ENCODE measurements at regions of chr7 and their contacts with region 1.

Region 1: GRCh38 chr7:151368136-151368571 is 26.5 kb downstream of the NUB1 start:
- DNase-seq: peak; percentile 55 to 80 (median 69)
- ATAC-seq: peak; percentile 99
- H3K4me3 ChIP-seq: no peak overlapping the region
- H3K4me3 Mint-ChIP-seq: no peak overlapping the region
- H3K27ac ChIP-seq: no peak overlapping the region
- H3K27ac Mint-ChIP-seq: peak overlapping the region in 2 of 9 donors; percentile 46 to 56
- H3K4me1 ChIP-seq: peaks cover 0 to 4% of the 10 kb centered on the region in 2 donors
- H3K4me1 Mint-ChIP-seq: peaks cover 3 to 29% (median 12%) of the 10 kb centered on the region in 7 donors
- H3K27me3 ChIP-seq: no peaks in the 10 kb centered on the region
- H3K27me3 Mint-ChIP-seq: no peaks in the 10 kb centered on the region

Region 2: GRCh38 chr7:150898475-150899011 is 469.6 kb before region 1 on chr7:
- CTCF ChIA-PET with region 1: no interaction called
- POLR2A ChIA-PET with region 1: no interaction called
- intact Hi-C with region 1: no loop called
- DNase-seq: peak; percentile 44 to 81 (median 70)
- ATAC-seq: peak; percentile 84
- H3K4me3 ChIP-seq: no peak overlapping the region
- H3K4me3 Mint-ChIP-seq: peak overlapping the region in 1 of 10 donors; percentile 19
- H3K27ac ChIP-seq: no peak overlapping the region
- H3K27ac Mint-ChIP-seq: peak overlapping the region in 1 of 9 donors; percentile 34
- H3K4me1 ChIP-seq: no peaks in the 10 kb centered on the region
- H3K4me1 Mint-ChIP-seq: peaks cover 0 to 11% (median 5%) of the 10 kb centered on the region in 7 donors
- H3K27me3 ChIP-seq: no peaks in the 10 kb centered on the region
- H3K27me3 Mint-ChIP-seq: peaks cover 32 to 66% (median 60%) of the 10 kb centered on the region in 5 donors

Region 3: GRCh38 chr7:151315038-151315655 is 53.0 kb before region 1 on chr7:
- CTCF ChIA-PET with region 1: interaction called, 10 read pairs
- POLR2A ChIA-PET with region 1: no interaction called
- intact Hi-C with region 1: loop called in 1 of 2 experiments (anchors 1 kb)
- DNase-seq: peak; percentile 48 to 87 (median 82)
- ATAC-seq: peak; percentile 96
- H3K4me3 ChIP-seq: no peak overlapping the region
- H3K4me3 Mint-ChIP-seq: peak overlapping the region in 8 of 10 donors; percentile 1 to 80 (median 56)
- H3K27ac ChIP-seq: no peak overlapping the region
- H3K27ac Mint-ChIP-seq: peak overlapping the region in 6 of 9 donors; percentile 33 to 81 (median 58)
- H3K4me1 ChIP-seq: no peaks in the 10 kb centered on the region
- H3K4me1 Mint-ChIP-seq: peaks cover 0 to 11% (median 5%) of the 10 kb centered on the region in 7 donors
- H3K27me3 ChIP-seq: no peaks in the 10 kb centered on the region
- H3K27me3 Mint-ChIP-seq: no peaks in the 10 kb centered on the region

Region 4: GRCh38 chr7:151408839-151409666 is 40.9 kb after region 1 on chr7:
- CTCF ChIA-PET with region 1: interaction called, 3 read pairs
- POLR2A ChIA-PET with region 1: interaction called, 5 read pairs
- intact Hi-C with region 1: loop called in 1 of 2 experiments (anchors 5 kb)
- DNase-seq: peak in 8 of 9 donors; percentile 23 to 71 (median 64)
- ATAC-seq: peak; percentile 88
- H3K4me3 ChIP-seq: peak overlapping the region; percentile 51
- H3K4me3 Mint-ChIP-seq: peak overlapping the region; percentile 67 to 88 (median 78)
- H3K27ac ChIP-seq: no peak overlapping the region
- H3K27ac Mint-ChIP-seq: peak overlapping the region in 6 of 9 donors; percentile 8 to 81 (median 52)
- H3K4me1 ChIP-seq: peaks cover 11 to 24% of the 10 kb centered on the region in 2 donors
- H3K4me1 Mint-ChIP-seq: peaks cover 11 to 24% (median 15%) of the 10 kb centered on the region in 7 donors
- H3K27me3 ChIP-seq: peaks cover 0 to 8% of the 10 kb centered on the region in 2 donors
- H3K27me3 Mint-ChIP-seq: peaks cover 19 to 63% (median 27%) of the 10 kb centered on the region in 5 donors

Region 5: DNA sequence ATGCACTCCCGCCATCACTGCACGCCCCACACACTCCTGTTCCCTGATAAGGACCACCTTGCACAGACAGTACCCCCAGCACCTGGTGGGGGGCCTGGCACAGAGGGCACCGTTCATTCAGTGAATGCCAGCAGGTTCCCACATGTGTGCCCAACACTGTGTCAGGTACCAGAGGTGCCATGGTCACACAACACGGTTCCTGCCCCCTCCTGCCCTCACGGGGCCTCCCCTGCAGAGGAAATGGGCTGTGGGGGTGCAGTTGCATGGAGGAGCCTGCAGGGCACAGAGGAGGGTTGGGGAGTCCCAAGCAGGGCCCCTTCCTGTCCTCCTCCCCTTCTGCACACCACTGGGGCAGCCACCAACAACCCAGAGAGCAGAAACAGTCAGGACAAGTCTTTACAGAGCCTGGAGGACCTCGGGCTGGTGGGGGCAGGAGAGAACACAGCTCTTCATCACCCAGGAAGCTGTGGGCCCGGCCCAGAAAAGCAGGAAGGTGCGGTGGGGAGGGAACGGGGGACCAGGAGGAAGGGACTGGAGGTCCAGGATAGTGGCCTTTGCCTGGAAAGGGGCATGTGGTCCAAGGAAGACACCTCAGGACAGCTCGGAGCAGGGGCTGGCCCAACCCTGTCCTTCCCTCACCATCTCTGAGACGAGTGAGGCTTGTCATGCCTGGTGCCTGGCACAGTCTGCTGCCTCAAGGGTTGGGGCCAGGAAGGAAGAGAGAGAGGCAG is 64.8 kb after region 1 on chr7:
- CTCF ChIA-PET with region 1: interaction called, 5 read pairs
- POLR2A ChIA-PET with region 1: interaction called, 3 read pairs
- intact Hi-C with region 1: loop called (anchors 1 to 5 kb)
- DNase-seq: peak in 7 of 9 donors; percentile 29 to 55 (median 53)
- ATAC-seq: peak; percentile 69
- H3K4me3 ChIP-seq: no peak overlapping the region
- H3K4me3 Mint-ChIP-seq: peak overlapping the region; percentile 8 to 79 (median 62)
- H3K27ac ChIP-seq: peak overlapping the region; percentile 25
- H3K27ac Mint-ChIP-seq: peak overlapping the region; percentile 54 to 90 (median 81)
- H3K4me1 ChIP-seq: peaks cover 51 to 62% of the 10 kb centered on the region in 2 donors
- H3K4me1 Mint-ChIP-seq: peaks cover 25 to 72% (median 52%) of the 10 kb centered on the region in 7 donors
- H3K27me3 ChIP-seq: no peaks in the 10 kb centered on the region
- H3K27me3 Mint-ChIP-seq: no peaks in the 10 kb centered on the region

Region 6: DNA sequence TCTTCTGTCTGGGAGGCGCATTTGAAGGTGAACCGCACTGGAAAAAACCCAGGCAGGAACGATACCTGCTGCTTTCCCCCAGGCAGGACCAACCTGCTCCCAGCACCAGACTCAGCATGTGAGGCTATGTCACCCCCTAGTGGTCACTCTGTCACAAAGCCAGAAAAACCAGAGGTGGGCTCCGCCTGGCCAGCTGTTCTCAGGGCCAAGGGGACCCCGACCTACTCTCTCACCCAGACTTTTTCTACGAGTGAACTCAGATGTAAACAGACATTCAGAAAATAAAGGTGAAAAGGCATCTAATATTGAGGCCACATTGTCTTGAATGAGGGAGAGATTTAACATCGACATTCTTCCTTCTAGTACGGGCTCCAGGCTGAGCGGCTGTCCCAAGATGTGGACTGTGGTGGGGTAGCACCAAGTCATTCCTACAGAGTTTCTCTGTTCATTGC is 391.5 kb after region 1 on chr7:
- CTCF ChIA-PET with region 1: interaction called, 3 read pairs
- POLR2A ChIA-PET with region 1: no interaction called
- intact Hi-C with region 1: loop called (anchors 1 kb)
- DNase-seq: peak in 8 of 9 donors; percentile 38 to 67 (median 58)
- ATAC-seq: peak; percentile 67
- H3K4me3 ChIP-seq: no peak overlapping the region
- H3K4me3 Mint-ChIP-seq: no peak overlapping the region
- H3K27ac ChIP-seq: no peak overlapping the region
- H3K27ac Mint-ChIP-seq: peak overlapping the region in 6 of 9 donors; percentile 8 to 83 (median 56)
- H3K4me1 ChIP-seq: peaks cover 12 to 22% of the 10 kb centered on the region in 2 donors
- H3K4me1 Mint-ChIP-seq: peaks cover 17 to 60% (median 33%) of the 10 kb centered on the region in 7 donors
- H3K27me3 ChIP-seq: no peaks in the 10 kb centered on the region
- H3K27me3 Mint-ChIP-seq: no peaks in the 10 kb centered on the region

Measured in naive thymus-derived CD4-positive, alpha-beta T cell (primary cell).